Activated T-helper 1 cell treated with anti-CD3 and anti-CD28 coated beads, Interleukin-12 subunit alpha, Interleukin-12 subunit beta, Interleukin-2, Interleukin-4 antibody, amounts not matched to agents 30 ng/mL and 10 ng/mL and 1 ng/mL, durations not matched to agents 14 hours and 24 hours and 36 hours (primary cell): ENCODE measurements at regions of chr17 and their contacts with region 1.

Region 1: GRCh38 chr17:75978938-75979704 is at the starts of genes ACOX1 and TEN1:
- DNase-seq: peak; percentile 92
- H3K4me3 Mint-ChIP-seq: peak within 1 kb of the TSS; percentile 91
- H3K27ac Mint-ChIP-seq: peak within 1 kb of the TSS; percentile 95
- H3K4me1 Mint-ChIP-seq: peaks cover 33% of the 10 kb centered on the region
- H3K27me3 Mint-ChIP-seq: no peaks in the 10 kb centered on the region
- total RNA-seq, gene ACOX1: 25.3 and 28.2 TPM in 2 replicates
- total RNA-seq, gene TEN1: 10.7 and 15.4 TPM in 2 replicates

Region 2: DNA sequence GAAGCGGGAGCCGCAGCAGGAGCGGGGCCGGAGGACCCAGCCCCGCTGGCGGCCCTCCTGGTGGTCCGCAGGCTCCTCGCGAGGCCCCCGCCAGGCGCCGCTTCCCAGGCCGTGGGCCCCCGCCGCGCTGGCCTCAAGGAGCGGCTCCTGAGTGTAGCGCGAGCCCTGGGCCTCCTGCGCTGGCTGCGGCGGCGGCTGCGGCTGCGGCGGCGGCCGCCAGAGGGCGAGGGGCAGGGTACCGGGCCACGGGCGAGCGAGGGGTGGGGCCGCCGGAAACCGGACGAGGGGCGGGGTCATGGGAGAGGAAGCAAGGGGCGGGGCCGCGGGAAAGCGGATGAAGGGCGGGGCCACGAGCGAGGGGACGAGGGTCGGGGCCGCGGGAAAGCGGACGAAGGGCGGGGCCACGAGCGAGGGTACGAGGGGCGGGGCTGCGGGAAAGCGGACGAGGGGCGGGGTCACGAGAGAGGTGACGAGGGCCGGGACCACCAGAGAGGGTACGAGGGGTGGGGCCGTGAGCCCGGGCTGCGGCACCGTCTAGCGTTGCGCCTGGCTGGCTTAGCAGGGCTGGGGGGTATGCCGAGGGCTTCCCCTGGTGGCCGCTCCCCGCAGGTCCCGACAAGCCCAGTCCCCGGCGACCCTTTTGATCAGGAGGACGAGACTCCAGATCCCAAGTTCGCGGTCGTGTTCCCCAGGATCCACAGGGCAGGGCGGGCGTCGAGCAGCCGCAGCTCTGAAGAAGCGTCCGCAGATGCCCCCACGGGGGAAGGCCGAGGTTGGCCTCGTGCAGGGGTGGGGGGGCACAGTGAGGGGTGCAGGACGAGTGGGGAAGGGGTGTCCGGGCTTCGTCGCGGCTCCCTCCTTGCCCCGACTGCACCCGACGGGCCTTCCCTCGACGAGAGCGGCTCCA is 389.9 kb before region 1 on chr17:
- intact Hi-C with region 1: loop called (anchors 1 kb)
- DNase-seq: peak; percentile 88
- H3K4me3 Mint-ChIP-seq: peak overlapping the region; percentile 78
- H3K27ac Mint-ChIP-seq: peak overlapping the region; percentile 77
- H3K4me1 Mint-ChIP-seq: no peaks in the 10 kb centered on the region
- H3K27me3 Mint-ChIP-seq: peaks cover 17% of the 10 kb centered on the region

Region 3: DNA sequence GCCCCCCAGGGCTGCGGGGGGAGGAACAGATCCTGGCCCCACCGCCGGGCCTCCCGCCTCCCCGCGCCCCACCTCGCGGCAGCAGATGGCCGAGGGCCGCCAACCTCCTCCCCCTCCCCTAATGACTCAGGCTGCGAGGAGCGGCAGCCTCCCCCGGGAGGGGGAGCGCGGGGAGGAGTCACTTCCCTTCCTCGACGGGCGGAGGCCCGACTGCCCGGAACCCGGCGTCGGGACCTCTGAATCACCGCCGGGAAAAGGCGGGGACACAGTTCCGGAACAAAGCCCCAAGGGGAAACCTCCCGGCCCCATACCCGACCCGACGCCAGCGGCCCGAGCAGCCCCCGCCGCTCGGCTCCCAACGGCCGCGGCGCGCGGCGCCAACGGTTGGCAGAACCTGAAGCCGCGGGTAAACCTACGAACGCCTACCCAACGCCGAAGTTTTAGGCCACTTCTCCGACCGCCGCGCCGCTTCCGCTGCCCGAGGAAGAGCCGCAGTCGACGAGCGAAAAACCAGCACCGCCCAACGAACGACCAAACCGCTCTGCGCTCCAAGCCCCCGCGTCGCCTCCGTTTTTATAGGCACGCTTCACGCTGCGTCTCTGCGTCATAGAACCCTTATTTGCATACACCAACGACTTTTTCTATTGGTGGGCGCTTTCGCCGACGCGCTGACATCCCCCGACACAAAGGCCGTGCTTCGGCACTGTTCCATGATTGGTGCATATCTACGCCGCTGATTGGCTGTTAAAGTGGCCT is 199.7 kb before region 1 on chr17:
- intact Hi-C with region 1: loop called (anchors 1 kb)
- DNase-seq: peak; percentile 94
- H3K4me3 Mint-ChIP-seq: peak overlapping the region; percentile 98
- H3K27ac Mint-ChIP-seq: peak overlapping the region; percentile 99
- H3K4me1 Mint-ChIP-seq: peaks cover 52% of the 10 kb centered on the region
- H3K27me3 Mint-ChIP-seq: peaks cover 2% of the 10 kb centered on the region

Region 4: DNA sequence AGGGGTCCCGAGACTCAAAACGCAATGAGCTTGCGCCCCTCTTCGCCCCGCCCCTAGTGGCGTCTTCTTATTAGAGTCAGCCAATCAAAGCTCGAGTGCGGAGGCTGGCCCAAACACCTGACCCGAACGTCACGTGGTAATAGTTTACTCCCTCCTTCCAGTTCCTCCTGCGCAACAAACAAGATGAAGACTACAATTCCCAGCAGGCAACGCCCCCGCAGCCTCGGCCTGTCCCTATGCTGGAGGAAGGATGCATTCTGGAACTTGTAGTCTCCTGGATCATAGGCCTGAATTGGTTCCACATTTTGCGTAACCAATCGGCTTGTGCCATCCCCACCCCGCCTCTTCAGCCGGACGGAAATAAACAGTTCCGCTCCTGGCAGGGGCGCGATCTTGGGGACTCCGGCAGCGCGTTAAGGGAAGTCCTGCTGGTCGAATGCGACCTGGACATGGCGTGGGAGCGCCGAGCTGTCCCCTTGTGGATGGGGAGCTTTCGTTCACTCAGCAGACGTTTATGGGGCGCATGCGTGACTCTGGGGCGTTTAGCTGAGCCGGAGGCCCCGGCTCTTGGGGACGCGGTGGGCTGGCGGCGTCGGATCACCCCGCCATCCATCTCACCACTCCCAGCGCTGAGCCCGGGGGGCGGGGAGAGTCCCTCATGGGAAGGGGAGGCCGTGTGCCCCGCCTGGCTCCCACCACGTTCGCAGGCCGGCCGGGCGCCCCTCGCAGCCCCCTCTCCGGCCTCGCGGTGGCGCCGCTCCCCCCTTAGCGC is 123.6 kb before region 1 on chr17 and contains the start of gene WBP2:
- intact Hi-C with region 1: loop called (anchors 1 kb)
- DNase-seq: peak; percentile 96
- H3K4me3 Mint-ChIP-seq: no peak within 1 kb of the TSS
- H3K27ac Mint-ChIP-seq: peak within 1 kb of the TSS; percentile 88
- H3K4me1 Mint-ChIP-seq: peaks cover 34% of the 10 kb centered on the region
- H3K27me3 Mint-ChIP-seq: no peaks in the 10 kb centered on the region
- total RNA-seq, gene WBP2: 68.8 and 74.4 TPM in 2 replicates

Region 5: GRCh38 chr17:75940724-75941441 is 38.2 kb before region 1 on chr17 and contains the start of gene FBF1:
- intact Hi-C with region 1: loop called (anchors 1 kb)
- DNase-seq: peak; percentile 88
- H3K4me3 Mint-ChIP-seq: peak within 1 kb of the TSS; percentile 88
- H3K27ac Mint-ChIP-seq: peak within 1 kb of the TSS; percentile 50
- H3K4me1 Mint-ChIP-seq: peaks cover 13% of the 10 kb centered on the region
- H3K27me3 Mint-ChIP-seq: no peaks in the 10 kb centered on the region
- total RNA-seq, gene FBF1: 19.4 and 20.0 TPM in 2 replicates

Region 6: GRCh38 chr17:75950821-75951554 is 28.1 kb before region 1 on chr17:
- intact Hi-C with region 1: no loop called
- DNase-seq: no peak
- H3K4me3 Mint-ChIP-seq: no peak overlapping the region
- H3K27ac Mint-ChIP-seq: no peak overlapping the region
- H3K4me1 Mint-ChIP-seq: peaks cover 7% of the 10 kb centered on the region
- H3K27me3 Mint-ChIP-seq: no peaks in the 10 kb centered on the region

Region 7: GRCh38 chr17:76103274-76104139 is 124.4 kb after region 1 on chr17 and contains the start of gene EXOC7:
- intact Hi-C with region 1: loop called (anchors 1 kb)
- DNase-seq: peak; percentile 93
- H3K4me3 Mint-ChIP-seq: peak within 1 kb of the TSS; percentile 96
- H3K27ac Mint-ChIP-seq: peak within 1 kb of the TSS; percentile 93
- H3K4me1 Mint-ChIP-seq: peaks cover 15% of the 10 kb centered on the region
- H3K27me3 Mint-ChIP-seq: peaks cover under 1% of the 10 kb centered on the region
- total RNA-seq, gene EXOC7: 108 and 116 TPM in 2 replicates

Region 8: DNA sequence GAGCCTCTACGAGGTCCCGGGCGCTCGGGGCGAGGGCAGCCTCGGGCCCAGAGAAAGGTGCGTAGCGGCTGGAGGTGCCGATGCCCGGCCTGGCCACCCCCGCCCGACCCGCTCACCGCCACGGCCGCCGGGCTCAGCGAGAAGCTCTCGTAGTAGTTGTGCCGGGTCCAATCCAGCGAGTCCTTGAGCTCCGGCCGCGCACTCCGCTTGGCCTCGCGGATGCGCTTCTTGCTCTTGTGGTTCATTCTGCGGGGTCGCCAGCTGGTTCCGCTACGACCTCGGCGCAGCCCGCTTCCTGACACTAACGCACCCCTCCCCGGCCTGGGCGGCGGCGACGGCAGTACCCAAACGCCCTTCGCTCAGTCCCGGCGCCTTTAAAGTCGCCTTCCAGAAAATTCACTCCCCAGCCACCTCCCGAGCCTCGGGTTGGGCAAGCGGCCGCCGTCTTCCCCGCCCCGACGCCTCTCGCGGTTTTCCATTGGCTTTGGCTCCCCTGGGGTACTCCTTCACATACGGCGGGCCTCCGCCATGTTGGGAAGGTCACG is 747.2 kb after region 1 on chr17 and contains the start of gene JMJD6:
- intact Hi-C with region 1: loop called (anchors 1 kb)
- DNase-seq: peak; percentile 95
- H3K4me3 Mint-ChIP-seq: peak within 1 kb of the TSS; percentile 95
- H3K27ac Mint-ChIP-seq: peak within 1 kb of the TSS; percentile 96
- H3K4me1 Mint-ChIP-seq: peaks cover 42% of the 10 kb centered on the region
- H3K27me3 Mint-ChIP-seq: no peaks in the 10 kb centered on the region
- total RNA-seq, gene JMJD6: 80.5 TPM in 2 replicates